ENCODE measurements at regions of chr7 and their contacts with region 1.

Region 1: DNA sequence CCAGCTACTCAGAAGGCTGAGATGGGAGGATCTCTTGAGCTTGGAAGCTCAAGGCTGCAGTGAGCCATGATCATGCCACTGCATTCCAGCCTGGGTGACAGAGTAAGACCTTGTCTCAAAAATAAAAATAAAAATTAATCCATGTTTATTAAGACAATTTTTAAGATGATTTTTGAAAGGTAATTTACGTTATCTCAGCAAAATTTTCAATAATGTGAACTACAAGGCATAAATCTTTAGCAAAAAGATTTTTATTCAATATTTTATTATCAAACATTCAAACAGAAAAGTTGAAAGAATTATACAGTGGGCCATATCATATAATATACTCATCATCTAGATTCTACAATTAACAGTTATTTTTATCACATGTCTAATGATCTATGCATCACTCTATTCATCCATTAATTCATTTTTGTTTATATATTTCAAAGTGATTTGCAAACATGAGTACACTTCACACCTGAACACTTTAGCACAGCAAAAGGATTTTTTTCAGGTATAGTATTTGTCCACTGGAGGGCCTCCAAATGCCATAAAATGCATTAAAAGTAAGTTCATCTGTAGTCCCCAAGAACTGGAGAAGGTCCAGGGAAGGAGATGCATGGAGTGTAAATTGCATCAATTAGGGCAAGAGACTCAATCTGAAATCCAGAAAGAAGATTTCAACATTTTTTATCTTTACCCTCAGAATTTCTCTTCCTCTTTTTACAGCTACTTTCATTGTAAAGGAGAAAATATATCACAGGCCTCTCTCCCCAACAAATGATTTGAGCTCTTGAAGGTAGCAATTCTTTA is 38.6 kb upstream of the RSBN1L start:
- DNase-seq: peak in 2 of 5 donors; percentile 65 to 80
- H3K4me3 ChIP-seq: no peak overlapping the region
- H3K27ac ChIP-seq: no peak overlapping the region
- H3K4me1 ChIP-seq: no peaks in the 10 kb centered on the region
- H3K27me3 ChIP-seq: no peaks in the 10 kb centered on the region
- CTCF ChIP-seq: peak; percentile 53

Region 2: DNA sequence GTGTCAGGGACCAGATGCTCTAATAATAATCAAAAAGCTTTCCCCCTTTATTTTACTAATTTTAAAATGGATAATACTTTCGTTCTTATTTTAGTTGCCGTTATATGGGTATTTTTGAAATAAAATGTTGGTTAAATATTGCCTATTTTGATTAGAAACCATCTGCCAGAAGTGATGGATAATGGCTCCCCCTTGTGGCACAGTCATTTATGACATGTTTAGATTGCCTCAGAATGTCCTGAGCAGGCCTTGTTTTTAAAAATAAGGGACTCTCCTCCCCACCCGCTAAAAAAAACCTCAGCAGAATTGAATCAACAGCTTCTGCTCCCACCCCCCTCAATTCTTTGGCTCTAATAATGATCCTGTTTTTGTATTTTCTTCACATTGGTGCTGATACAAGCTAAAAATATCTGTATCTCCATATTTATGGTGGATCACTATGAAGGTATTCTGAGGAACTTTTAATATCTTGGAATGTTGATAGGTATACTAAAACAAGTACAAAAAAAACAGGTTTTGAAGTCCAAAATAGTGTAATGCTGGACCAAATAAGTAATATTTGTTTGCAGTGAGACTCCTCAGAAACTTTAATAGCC is 101.8 kb after region 1 on chr7:
- intact Hi-C with region 1: loop called (anchors 5 kb)
- DNase-seq: peak in 4 of 5 donors; percentile 58 to 78 (median 67)
- H3K4me3 ChIP-seq: peak overlapping the region in 1 of 3 donors; percentile 8
- H3K27ac ChIP-seq: no peak overlapping the region
- H3K4me1 ChIP-seq: peaks cover 0 to 26% (median 5%) of the 10 kb centered on the region in 3 donors
- H3K27me3 ChIP-seq: no peaks in the 10 kb centered on the region
- CTCF ChIP-seq: peak; percentile 88

Region 3: GRCh38 chr7:78472519-78472918 is 814.9 kb after region 1 on chr7:
- intact Hi-C with region 1: no loop called
- DNase-seq: no peak
- H3K4me3 ChIP-seq: no peak overlapping the region
- H3K27ac ChIP-seq: no peak overlapping the region
- H3K4me1 ChIP-seq: no peaks in the 10 kb centered on the region
- H3K27me3 ChIP-seq: no peaks in the 10 kb centered on the region
- CTCF ChIP-seq: no peak

Measured in kidney (tissue), 22 donors.